Colonic mucosa (tissue), 4 donors: ENCODE measurements at regions of chr16 and their contacts with region 1.

Region 1: GRCh38 chr16:70679666-70680494 is 6.0 kb downstream of the MTSS2 start:
- DNase-seq: no peak
- H3K4me3 ChIP-seq: no peak overlapping the region
- H3K27ac ChIP-seq: no peak overlapping the region
- H3K4me1 ChIP-seq: no peaks in the 10 kb centered on the region
- H3K27me3 ChIP-seq: no peaks in the 10 kb centered on the region
- CTCF ChIP-seq: no peak

Region 2: GRCh38 chr16:70770626-70771552 is 91.0 kb after region 1 on chr16:
- intact Hi-C with region 1: loop called (anchors 2 kb)
- DNase-seq: peak; percentile 69
- H3K4me3 ChIP-seq: no peak overlapping the region
- H3K27ac ChIP-seq: no peak overlapping the region
- H3K4me1 ChIP-seq: no peaks in the 10 kb centered on the region
- H3K27me3 ChIP-seq: no peaks in the 10 kb centered on the region
- CTCF ChIP-seq: peak; percentile 91

Region 3: DNA sequence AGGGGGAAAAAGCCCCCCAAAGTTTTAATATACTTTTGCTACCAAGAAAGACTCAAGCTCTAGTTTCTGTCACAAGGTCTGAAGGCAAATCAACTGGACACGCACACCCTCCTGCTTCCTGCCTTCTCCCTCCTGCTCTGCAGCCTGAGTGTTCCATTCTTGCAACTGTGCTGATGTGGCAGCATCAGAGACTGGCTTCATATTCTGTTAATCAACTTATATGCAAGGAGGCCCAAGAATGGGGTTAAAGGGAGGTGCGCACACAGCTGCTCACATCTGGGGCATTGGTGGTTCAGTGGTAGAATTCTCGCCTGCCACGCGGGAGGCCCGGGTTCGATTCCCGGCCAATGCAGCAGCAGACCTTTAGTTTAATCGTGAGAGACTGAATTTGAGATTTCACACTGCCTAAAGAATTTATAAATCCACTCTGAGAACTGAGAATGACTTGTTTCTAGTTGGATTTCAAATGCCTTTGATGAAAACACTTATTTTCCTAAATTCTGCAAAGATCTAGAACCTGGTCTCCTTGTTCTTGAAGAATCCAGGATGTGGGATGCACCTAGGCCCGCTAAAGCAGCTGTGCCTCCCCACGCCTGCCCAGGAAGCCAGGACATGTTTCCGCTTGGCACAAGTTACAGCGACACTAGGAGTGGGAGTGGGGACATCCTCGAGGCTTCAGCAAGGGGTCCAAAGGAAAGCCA is 109.5 kb after region 1 on chr16:
- intact Hi-C with region 1: no loop called
- DNase-seq: peak; percentile 40
- H3K4me3 ChIP-seq: no peak overlapping the region
- H3K27ac ChIP-seq: no peak overlapping the region
- H3K4me1 ChIP-seq: no peaks in the 10 kb centered on the region
- H3K27me3 ChIP-seq: no peaks in the 10 kb centered on the region
- CTCF ChIP-seq: no peak